ENCODE measurements at regions of chr19 and their contacts with region 1.

Region 1: GRCh38 chr19:43446746-43447489 is 18.5 kb downstream of the LYPD3 start:
- DNase-seq: peak; percentile 78
- H3K4me3 ChIP-seq: no peak overlapping the region
- H3K27ac ChIP-seq: no peak overlapping the region
- H3K4me1 ChIP-seq: no peaks in the 10 kb centered on the region
- H3K27me3 ChIP-seq: no peaks in the 10 kb centered on the region
- CTCF ChIP-seq: peak; percentile 94

Region 2: DNA sequence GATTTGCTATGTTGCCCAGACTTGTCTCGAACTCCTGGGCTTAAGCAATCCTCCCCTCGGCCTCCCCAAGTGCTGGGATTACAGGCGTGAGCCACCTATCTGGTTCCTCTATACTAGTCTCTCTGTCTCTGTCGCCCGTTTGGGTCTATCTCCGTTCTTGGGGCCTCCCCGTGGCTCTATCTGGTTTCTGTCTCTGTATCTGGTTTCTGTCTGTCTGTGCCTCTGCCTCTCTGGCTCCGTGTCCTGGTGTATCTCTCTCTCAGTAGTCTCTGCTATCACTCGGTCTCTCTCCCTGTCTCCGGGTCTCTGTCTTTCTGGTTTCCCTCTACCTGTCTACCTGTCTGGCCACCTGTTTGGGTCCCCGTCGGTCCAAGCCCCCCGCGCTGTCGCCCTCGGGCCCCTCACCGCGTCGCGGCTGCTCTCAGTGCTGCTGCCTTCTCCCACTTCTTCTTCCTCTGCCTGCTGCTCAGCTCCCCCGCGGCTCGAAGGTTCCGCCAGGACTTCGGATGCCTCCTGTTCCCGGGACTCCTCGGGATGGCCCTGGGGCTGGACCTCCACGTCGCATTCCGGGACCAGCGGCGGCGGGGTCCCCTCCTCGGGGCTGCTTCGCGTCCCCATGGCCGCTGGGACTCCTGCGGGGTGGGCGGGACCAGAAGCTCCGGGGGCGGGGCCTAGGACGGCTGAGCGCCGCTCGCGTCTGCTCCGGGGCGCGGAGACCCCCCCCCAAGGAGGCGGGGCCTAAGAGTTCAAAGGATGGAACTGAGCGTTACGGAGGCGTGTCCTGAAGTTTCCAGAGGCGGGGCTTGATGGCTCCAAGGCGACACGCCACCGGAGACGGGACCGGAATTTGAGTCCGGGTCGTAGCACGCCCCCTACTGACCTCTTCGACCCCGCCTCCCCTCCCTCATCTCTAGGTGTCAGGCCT is 56.8 kb after region 1 on chr19:
- CTCF ChIA-PET with region 1: interaction called, 4 read pairs
- POLR2A ChIA-PET with region 1: interaction called, 4 read pairs
- intact Hi-C with region 1: loop called (anchors 5 kb)
- DNase-seq: peak; percentile 97
- H3K4me3 ChIP-seq: peak overlapping the region; percentile 83
- H3K27ac ChIP-seq: peak overlapping the region; percentile 73
- H3K4me1 ChIP-seq: peaks cover 5% of the 10 kb centered on the region
- H3K27me3 ChIP-seq: no peaks in the 10 kb centered on the region
- CTCF ChIP-seq: peak; percentile 44

Region 3: GRCh38 chr19:43519436-43520088 is 72.6 kb after region 1 on chr19:
- CTCF ChIA-PET with region 1: interaction called, 102 read pairs
- POLR2A ChIA-PET with region 1: no interaction called
- intact Hi-C with region 1: loop called (anchors 1 kb)
- DNase-seq: peak; percentile 89
- H3K4me3 ChIP-seq: no peak overlapping the region
- H3K27ac ChIP-seq: no peak overlapping the region
- H3K4me1 ChIP-seq: no peaks in the 10 kb centered on the region
- H3K27me3 ChIP-seq: no peaks in the 10 kb centered on the region
- CTCF ChIP-seq: peak; percentile 94

Region 4: GRCh38 chr19:43545981-43546380 is 99.1 kb after region 1 on chr19:
- CTCF ChIA-PET with region 1: no interaction called
- POLR2A ChIA-PET with region 1: no interaction called
- intact Hi-C with region 1: no loop called
- DNase-seq: no peak
- H3K4me3 ChIP-seq: no peak overlapping the region
- H3K27ac ChIP-seq: no peak overlapping the region
- H3K4me1 ChIP-seq: no peaks in the 10 kb centered on the region
- H3K27me3 ChIP-seq: no peaks in the 10 kb centered on the region
- CTCF ChIP-seq: no peak

Region 5: GRCh38 chr19:43809762-43810696 is 363.1 kb after region 1 on chr19:
- CTCF ChIA-PET with region 1: interaction called, 3 read pairs
- POLR2A ChIA-PET with region 1: no interaction called
- intact Hi-C with region 1: loop called (anchors 10 kb)
- DNase-seq: peak; percentile 73
- H3K4me3 ChIP-seq: no peak overlapping the region
- H3K27ac ChIP-seq: no peak overlapping the region
- H3K4me1 ChIP-seq: no peaks in the 10 kb centered on the region
- H3K27me3 ChIP-seq: no peaks in the 10 kb centered on the region
- CTCF ChIP-seq: peak; percentile 71

Measured in A673 (cell line).